ENCODE measurements at regions of chr20 and their contacts with region 1.

Region 1: GRCh38 chr20:59006864-59007664 is at the start of gene CTSZ:
- DNase-seq: peak; percentile 65
- ATAC-seq: peak; percentile 25
- H3K4me3 Mint-ChIP-seq: peak within 1 kb of the TSS; percentile 95
- H3K27ac Mint-ChIP-seq: peak within 1 kb of the TSS; percentile 99
- H3K4me1 Mint-ChIP-seq: peaks cover 61% of the 10 kb centered on the region
- H3K27me3 Mint-ChIP-seq: no peaks in the 10 kb centered on the region
- CTCF ChIP-seq: no peak
- total RNA-seq, gene CTSZ: 262 and 278 TPM in 2 replicates

Region 2: GRCh38 chr20:58650776-58651558 is 356.1 kb before region 1 on chr20 and contains the start of gene STX16:
- CTCF ChIA-PET with region 1: no interaction called
- POLR2A ChIA-PET with region 1: no interaction called
- intact Hi-C with region 1: loop called (anchors 10 kb)
- DNase-seq: peak; percentile 79
- ATAC-seq: peak; percentile 82
- H3K4me3 Mint-ChIP-seq: peak within 1 kb of the TSS; percentile 97
- H3K27ac Mint-ChIP-seq: peak within 1 kb of the TSS; percentile 93
- H3K4me1 Mint-ChIP-seq: peaks cover 20% of the 10 kb centered on the region
- H3K27me3 Mint-ChIP-seq: no peaks in the 10 kb centered on the region
- CTCF ChIP-seq: no peak
- total RNA-seq, gene STX16: 71.4 and 77.4 TPM in 2 replicates

Region 3: DNA sequence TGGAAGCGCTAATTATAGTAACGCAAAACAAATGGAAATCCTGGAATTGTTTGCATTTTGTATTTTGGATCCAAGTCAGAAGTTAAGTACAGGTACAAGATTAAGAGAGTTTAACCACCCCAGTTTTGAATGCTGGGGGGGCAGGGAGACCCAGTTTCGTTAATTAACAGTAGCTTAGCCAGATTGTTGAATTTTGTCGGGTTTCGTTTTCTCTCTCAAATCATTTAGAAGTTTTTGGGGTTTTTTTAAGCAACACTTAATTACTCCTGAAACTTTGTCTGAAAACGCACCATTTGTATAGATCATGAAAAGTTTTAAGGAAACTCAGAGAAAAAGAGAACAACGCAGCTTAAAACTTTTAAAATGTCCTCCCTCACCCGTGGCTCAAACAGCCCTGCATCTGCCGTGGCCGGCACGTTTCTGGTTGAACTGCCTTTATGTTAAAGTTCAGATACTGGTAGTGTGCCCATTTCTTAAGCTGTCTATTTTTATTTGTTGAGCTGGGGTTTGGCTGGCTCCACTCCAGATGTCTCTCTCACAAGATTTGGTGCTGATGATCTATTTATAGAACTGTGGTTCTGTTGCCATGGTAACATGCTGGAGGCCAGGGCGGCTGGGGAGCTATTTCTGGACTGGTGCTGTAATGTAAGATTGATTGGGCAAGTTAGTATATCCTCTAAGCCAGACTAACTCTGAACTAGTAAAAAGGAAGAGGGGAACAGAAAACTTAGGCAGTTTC is 99.5 kb before region 1 on chr20:
- CTCF ChIA-PET with region 1: no interaction called
- POLR2A ChIA-PET with region 1: interaction called, 18 read pairs
- intact Hi-C with region 1: loop called (anchors 1 kb)
- DNase-seq: peak; percentile 50
- ATAC-seq: peak; percentile 83
- H3K4me3 Mint-ChIP-seq: peak overlapping the region; percentile 82
- H3K27ac Mint-ChIP-seq: peak overlapping the region; percentile 97
- H3K4me1 Mint-ChIP-seq: peaks cover 61% of the 10 kb centered on the region
- H3K27me3 Mint-ChIP-seq: no peaks in the 10 kb centered on the region
- CTCF ChIP-seq: no peak

Region 4: GRCh38 chr20:58993332-58994201 is 13.5 kb before region 1 on chr20:
- CTCF ChIA-PET with region 1: no interaction called
- POLR2A ChIA-PET with region 1: interaction called, 38 read pairs
- intact Hi-C with region 1: loop called (anchors 1 kb)
- DNase-seq: no peak
- ATAC-seq: no peak
- H3K4me3 Mint-ChIP-seq: no peak overlapping the region
- H3K27ac Mint-ChIP-seq: peak overlapping the region; percentile 63
- H3K4me1 Mint-ChIP-seq: peaks cover 44% of the 10 kb centered on the region
- H3K27me3 Mint-ChIP-seq: no peaks in the 10 kb centered on the region
- CTCF ChIP-seq: no peak

Region 5: GRCh38 chr20:59042796-59043660 is 36.0 kb after region 1 on chr20:
- CTCF ChIA-PET with region 1: no interaction called
- POLR2A ChIA-PET with region 1: interaction called, 20 read pairs
- intact Hi-C with region 1: loop called (anchors 1 kb)
- DNase-seq: peak; percentile 97
- ATAC-seq: peak; percentile 97
- H3K4me3 Mint-ChIP-seq: peak overlapping the region; percentile 95
- H3K27ac Mint-ChIP-seq: peak overlapping the region; percentile 91
- H3K4me1 Mint-ChIP-seq: peaks cover 52% of the 10 kb centered on the region
- H3K27me3 Mint-ChIP-seq: no peaks in the 10 kb centered on the region
- CTCF ChIP-seq: no peak

Region 6: GRCh38 chr20:59082077-59082740 is 75.1 kb after region 1 on chr20:
- CTCF ChIA-PET with region 1: no interaction called
- POLR2A ChIA-PET with region 1: no interaction called
- intact Hi-C with region 1: no loop called
- DNase-seq: no peak
- ATAC-seq: no peak
- H3K4me3 Mint-ChIP-seq: no peak overlapping the region
- H3K27ac Mint-ChIP-seq: no peak overlapping the region
- H3K4me1 Mint-ChIP-seq: peaks cover 11% of the 10 kb centered on the region
- H3K27me3 Mint-ChIP-seq: peaks cover 25% of the 10 kb centered on the region
- CTCF ChIP-seq: no peak

Region 7: DNA sequence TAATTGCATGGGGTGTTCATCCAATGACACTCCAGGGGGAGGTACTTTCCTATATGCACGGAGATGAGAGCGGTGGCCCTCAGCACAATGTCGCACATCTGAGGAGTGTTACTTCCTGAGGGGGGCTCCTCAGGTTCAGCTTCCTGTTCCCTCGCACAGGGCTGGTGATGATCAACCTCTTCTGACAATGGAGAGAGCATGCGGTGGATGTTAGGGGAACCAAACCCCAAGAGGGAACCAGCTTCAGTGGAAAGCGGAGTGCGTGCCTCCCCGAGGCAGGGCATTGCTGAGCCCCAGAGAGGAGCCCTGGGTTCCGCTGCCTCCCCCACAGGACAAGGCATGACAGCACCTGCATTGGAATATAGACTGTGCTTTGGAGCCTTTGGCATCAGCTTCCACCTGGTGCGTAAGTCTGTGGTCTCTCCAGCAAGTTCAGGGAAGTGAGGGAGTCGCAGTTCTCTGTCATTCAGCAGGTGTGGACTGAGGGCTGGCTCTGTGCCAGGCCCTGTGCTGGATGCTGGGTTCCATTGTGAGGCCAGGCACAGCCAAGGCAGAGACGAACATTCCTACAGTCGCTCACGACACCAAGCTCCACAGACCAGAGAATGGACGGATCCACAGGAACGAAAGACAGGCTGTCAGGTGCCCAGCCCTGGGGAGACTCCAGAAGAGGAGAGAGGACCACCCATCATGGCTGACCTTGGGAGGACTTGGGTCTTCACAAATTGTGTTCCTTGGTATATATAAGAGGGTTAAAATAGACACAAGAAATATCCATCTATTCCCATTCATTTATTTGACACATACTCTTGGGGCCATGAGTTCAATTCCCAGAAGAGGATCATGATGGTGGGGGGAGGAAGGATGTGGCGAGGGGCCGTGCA is 152.7 kb after region 1 on chr20:
- CTCF ChIA-PET with region 1: no interaction called
- POLR2A ChIA-PET with region 1: no interaction called
- intact Hi-C with region 1: loop called (anchors 5 kb)
- DNase-seq: no peak
- ATAC-seq: peak; percentile 33
- H3K4me3 Mint-ChIP-seq: peak overlapping the region; percentile 65
- H3K27ac Mint-ChIP-seq: peak overlapping the region; percentile 37
- H3K4me1 Mint-ChIP-seq: peaks cover 57% of the 10 kb centered on the region
- H3K27me3 Mint-ChIP-seq: no peaks in the 10 kb centered on the region
- CTCF ChIP-seq: no peak

Measured in activated B cell treated with CpG ODN at 0.5 μM for 24 hours (primary cell).